CD14-positive monocyte (primary cell): ENCODE measurements at regions of chr7 and their contacts with region 1.

Region 1: DNA sequence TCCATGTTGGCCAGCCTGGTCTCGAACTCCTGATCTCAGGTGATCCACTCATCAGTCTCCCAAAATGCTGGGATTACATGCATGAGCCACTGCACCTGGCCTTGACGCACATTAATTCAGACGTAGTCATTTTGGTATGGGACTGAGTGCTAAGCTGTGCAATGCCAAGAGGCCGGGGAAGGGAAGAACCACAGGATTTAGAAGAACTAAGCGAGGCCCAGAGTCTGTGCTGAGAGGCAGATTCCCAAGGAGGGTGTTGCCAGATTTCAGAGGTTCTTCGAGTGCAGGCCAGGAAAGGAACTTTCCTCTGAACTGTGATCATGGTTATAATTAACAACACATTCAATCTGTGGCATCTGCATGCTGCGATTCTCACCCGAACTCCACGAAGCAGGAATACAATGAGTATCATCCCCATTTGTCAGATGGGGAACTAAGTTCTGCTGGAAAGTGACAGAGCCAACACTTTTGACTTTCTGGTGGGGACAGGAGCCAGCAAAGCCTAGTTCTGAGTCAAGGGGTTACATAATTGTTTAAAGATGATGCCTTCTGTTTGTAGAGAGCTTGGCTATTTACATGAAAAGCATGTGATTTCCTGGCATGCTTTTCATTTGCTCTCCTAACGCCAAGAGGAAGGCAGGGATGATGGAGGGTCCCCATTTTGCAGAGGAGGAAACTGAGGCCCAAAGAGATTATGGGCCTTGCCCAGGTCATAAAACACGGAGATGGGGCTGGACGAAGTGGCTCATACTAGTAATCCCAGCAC is 6.2 kb upstream of the ZAN start:
- DNase-seq: no peak
- H3K4me3 ChIP-seq: no peak overlapping the region
- H3K4me3 Mint-ChIP-seq: no peak overlapping the region
- H3K27ac ChIP-seq: no peak overlapping the region
- H3K27ac Mint-ChIP-seq: no peak overlapping the region
- H3K4me1 ChIP-seq: no peaks in the 10 kb centered on the region
- H3K4me1 Mint-ChIP-seq: peaks cover 8% of the 10 kb centered on the region
- H3K27me3 ChIP-seq: peaks cover 0 to under 1% of the 10 kb centered on the region in 2 donors
- H3K27me3 Mint-ChIP-seq: peaks cover 20 to 33% (median 26%) of the 10 kb centered on the region in 3 donors
- CTCF ChIP-seq: no peak

Region 2: DNA sequence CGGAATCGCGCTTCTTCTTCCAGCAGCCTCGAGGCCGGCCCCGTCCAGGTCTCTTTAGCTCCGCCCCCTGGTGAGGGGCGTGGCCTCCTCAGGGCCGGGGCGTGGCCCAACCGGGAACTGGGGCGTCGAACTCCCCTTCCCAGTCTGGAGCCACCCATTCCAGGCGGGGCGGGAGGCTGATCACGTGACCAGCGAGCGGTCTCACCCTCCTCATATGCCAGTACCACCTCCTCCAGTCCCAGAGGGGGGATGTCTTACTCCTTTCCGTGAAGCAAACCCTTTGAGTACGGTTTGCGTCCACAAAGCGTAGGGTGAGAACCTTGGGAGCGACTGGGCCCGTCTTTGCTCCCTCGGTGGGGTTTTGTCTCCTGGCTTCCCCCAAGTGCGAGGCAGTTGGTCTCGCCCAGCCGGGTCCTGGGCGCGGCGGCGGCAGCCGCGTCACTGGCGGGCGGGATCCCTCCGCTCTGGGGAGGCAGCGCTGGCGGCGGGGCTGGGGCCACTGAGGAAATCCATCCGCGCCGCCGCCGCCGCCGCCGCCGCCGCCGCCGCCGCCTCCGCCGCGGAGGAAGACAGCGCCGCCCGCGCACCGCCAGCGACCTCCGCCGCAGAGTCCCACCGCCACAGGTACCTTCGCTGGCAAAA is 53.8 kb before region 1 on chr7 and contains the start of gene GNB2:
- intact Hi-C with region 1: no loop called
- DNase-seq: peak; percentile 97 to 99 (median 99)
- H3K4me3 ChIP-seq: peak within 1 kb of the TSS; percentile 64 to 100 (median 85)
- H3K4me3 Mint-ChIP-seq: peak within 1 kb of the TSS; percentile 97 to 98
- H3K27ac ChIP-seq: peak within 1 kb of the TSS; percentile 88 to 91
- H3K27ac Mint-ChIP-seq: peak within 1 kb of the TSS; percentile 94 to 98 (median 97)
- H3K4me1 ChIP-seq: peaks cover 30 to 42% of the 10 kb centered on the region in 2 donors
- H3K4me1 Mint-ChIP-seq: peaks cover 31% of the 10 kb centered on the region
- H3K27me3 ChIP-seq: no peaks in the 10 kb centered on the region
- H3K27me3 Mint-ChIP-seq: peaks cover 4 to 9% (median 8%) of the 10 kb centered on the region in 3 donors
- CTCF ChIP-seq: no peak
- polyA plus RNA-seq, gene GNB2: 90.0 to 436 (median 94.6) TPM

Region 3: DNA sequence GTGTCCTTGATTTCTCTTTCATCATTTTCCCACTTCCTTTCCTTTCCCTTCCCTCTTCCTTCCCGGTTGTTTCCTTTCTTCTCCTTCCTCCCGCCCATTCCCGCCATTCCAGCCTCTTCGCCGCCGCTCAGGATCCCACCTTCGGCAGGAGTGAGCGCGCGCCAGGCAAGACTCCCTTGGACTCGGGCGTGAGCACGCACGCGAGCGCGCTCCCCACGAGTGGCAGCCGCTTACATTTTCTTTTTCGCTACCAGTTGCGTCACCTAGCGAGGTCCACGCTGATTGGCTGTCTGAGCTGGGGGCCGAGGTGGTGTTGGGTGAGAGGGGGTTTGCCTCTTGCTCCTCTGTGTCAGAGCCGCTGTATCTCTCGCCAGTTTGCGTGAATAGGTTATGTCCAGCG is 18.0 kb after region 1 on chr7:
- intact Hi-C with region 1: loop called in 1 of 2 experiments (anchors 2 kb)
- DNase-seq: peak; percentile 2 to 37 (median 28)
- H3K4me3 ChIP-seq: peak overlapping the region; percentile 12 to 72 (median 18)
- H3K4me3 Mint-ChIP-seq: peak overlapping the region; percentile 86 to 95
- H3K27ac ChIP-seq: no peak overlapping the region
- H3K27ac Mint-ChIP-seq: peak overlapping the region in 1 of 7 donors; percentile 8
- H3K4me1 ChIP-seq: peaks cover 0 to 6% of the 10 kb centered on the region in 2 donors
- H3K4me1 Mint-ChIP-seq: peaks cover 9% of the 10 kb centered on the region
- H3K27me3 ChIP-seq: peaks cover 0 to 5% of the 10 kb centered on the region in 2 donors
- H3K27me3 Mint-ChIP-seq: peaks cover 11 to 19% (median 12%) of the 10 kb centered on the region in 3 donors
- CTCF ChIP-seq: no peak